ENCODE measurements at regions of chr11 and their contacts with region 1.

Region 1: GRCh38 chr11:11731311-11732083 is 109.7 kb upstream of the GALNT18 start:
- DNase-seq: peak; percentile 94
- H3K4me3 ChIP-seq: peak overlapping the region in 1 of 3 experiments; percentile 8
- H3K27ac ChIP-seq: peak overlapping the region; percentile 62
- H3K4me1 ChIP-seq: peaks cover 19% of the 10 kb centered on the region
- H3K27me3 ChIP-seq: no peaks in the 10 kb centered on the region
- CTCF ChIP-seq: no peak

Region 2: GRCh38 chr11:11701070-11701469 is 30.4 kb before region 1 on chr11:
- CTCF ChIA-PET with region 1: no interaction called
- dilution Hi-C with region 1: no loop called
- in situ Hi-C with region 1: no loop called
- intact Hi-C with region 1: loop called (anchors 1 kb)
- DNase-seq: peak; percentile 72
- H3K4me3 ChIP-seq: no peak overlapping the region
- H3K27ac ChIP-seq: no peak overlapping the region
- H3K4me1 ChIP-seq: peaks cover 8% of the 10 kb centered on the region
- H3K27me3 ChIP-seq: peaks cover 2% of the 10 kb centered on the region
- CTCF ChIP-seq: peak; percentile 46 to 64

Region 3: GRCh38 chr11:11748706-11749365 is 17.3 kb after region 1 on chr11:
- CTCF ChIA-PET with region 1: no interaction called
- dilution Hi-C with region 1: no loop called
- in situ Hi-C with region 1: no loop called
- intact Hi-C with region 1: loop called (anchors 2 kb)
- DNase-seq: peak; percentile 54
- H3K4me3 ChIP-seq: no peak overlapping the region
- H3K27ac ChIP-seq: peak overlapping the region; percentile 57
- H3K4me1 ChIP-seq: peaks cover 23% of the 10 kb centered on the region
- H3K27me3 ChIP-seq: no peaks in the 10 kb centered on the region
- CTCF ChIP-seq: no peak

Region 4: GRCh38 chr11:12008790-12009616 is 277.5 kb after region 1 on chr11:
- CTCF ChIA-PET with region 1: no interaction called
- dilution Hi-C with region 1: no loop called
- in situ Hi-C with region 1: no loop called
- intact Hi-C with region 1: loop called (anchors 5 kb)
- DNase-seq: peak; percentile 36
- H3K4me3 ChIP-seq: peak overlapping the region; percentile 59 to 85 (median 77)
- H3K27ac ChIP-seq: peak overlapping the region; percentile 36
- H3K4me1 ChIP-seq: peaks cover 41% of the 10 kb centered on the region
- H3K27me3 ChIP-seq: no peaks in the 10 kb centered on the region
- CTCF ChIP-seq: no peak

Measured in mammary epithelial cell (primary cell).